ENCODE measurements at regions of chr3 and their contacts with region 1.

Region 1: GRCh38 chr3:175270198-175270837 is 411.2 kb downstream of the NAALADL2 start:
- DNase-seq: no peak
- ATAC-seq: peak; percentile 8
- H3K4me3 ChIP-seq: peak overlapping the region; percentile 77
- H3K27ac ChIP-seq: peak overlapping the region; percentile 35; the same call in 1 of the 2 replicates
- H3K4me1 ChIP-seq: no peaks in the 10 kb centered on the region
- H3K27me3 ChIP-seq: no peaks in the 10 kb centered on the region
- CTCF ChIP-seq: no peak
- EP300 ChIP-seq: no peak
- POLR2A ChIP-seq: no peak
- RAD21 ChIP-seq: no peak

Region 2: GRCh38 chr3:175255698-175256097 is 14.6 kb before region 1 on chr3:
- CTCF ChIA-PET with region 1: interaction called, 5 read pairs
- POLR2A ChIA-PET with region 1: interaction called, 3 read pairs
- RAD21 ChIA-PET with region 1: interaction called, 8 read pairs
- SMC1A ChIA-PET with region 1: interaction called, 14 read pairs
- in situ Hi-C with region 1: no loop called
- intact Hi-C with region 1: no loop called
- DNase-seq: no peak
- ATAC-seq: peak; percentile 11
- H3K4me3 ChIP-seq: no peak overlapping the region
- H3K27ac ChIP-seq: no peak overlapping the region
- H3K4me1 ChIP-seq: no peaks in the 10 kb centered on the region
- H3K27me3 ChIP-seq: no peaks in the 10 kb centered on the region
- CTCF ChIP-seq: no peak
- EP300 ChIP-seq: no peak
- POLR2A ChIP-seq: no peak
- RAD21 ChIP-seq: no peak

Region 3: GRCh38 chr3:175295248-175296052 is 25.1 kb after region 1 on chr3:
- CTCF ChIA-PET with region 1: interaction called, 3 read pairs
- POLR2A ChIA-PET with region 1: interaction called, 14 read pairs
- RAD21 ChIA-PET with region 1: interaction called, 24 read pairs
- SMC1A ChIA-PET with region 1: interaction called, 39 read pairs
- in situ Hi-C with region 1: no loop called
- intact Hi-C with region 1: no loop called
- DNase-seq: no peak
- ATAC-seq: peak; percentile 27
- H3K4me3 ChIP-seq: no peak overlapping the region
- H3K27ac ChIP-seq: no peak overlapping the region
- H3K4me1 ChIP-seq: no peaks in the 10 kb centered on the region
- H3K27me3 ChIP-seq: no peaks in the 10 kb centered on the region
- CTCF ChIP-seq: no peak
- EP300 ChIP-seq: no peak
- POLR2A ChIP-seq: no peak
- RAD21 ChIP-seq: no peak

Region 4: DNA sequence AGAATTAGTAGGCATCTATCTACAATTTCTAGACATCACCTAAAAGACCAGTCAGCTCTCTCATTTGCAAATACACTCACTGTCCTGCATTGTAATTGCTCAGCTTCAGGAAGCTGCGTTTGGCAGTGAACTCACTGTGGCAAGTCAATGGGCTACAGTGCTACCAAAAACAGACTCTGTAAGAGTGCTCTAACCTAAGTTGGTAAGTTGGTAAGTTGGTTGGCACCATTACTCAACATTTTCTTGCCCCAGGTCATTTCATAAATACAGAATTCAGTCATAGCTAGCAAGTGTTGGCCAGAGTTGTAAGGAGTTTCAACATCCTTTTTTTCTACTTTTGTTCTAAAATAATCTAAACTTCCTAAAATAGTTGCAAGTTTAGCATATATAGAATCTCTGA is 55.1 kb after region 1 on chr3:
- CTCF ChIA-PET with region 1: no interaction called
- POLR2A ChIA-PET with region 1: interaction called, 3 read pairs
- RAD21 ChIA-PET with region 1: interaction called, 7 read pairs
- SMC1A ChIA-PET with region 1: interaction called, 15 read pairs
- in situ Hi-C with region 1: no loop called
- intact Hi-C with region 1: no loop called
- DNase-seq: no peak
- ATAC-seq: peak; percentile 90
- H3K4me3 ChIP-seq: no peak overlapping the region
- H3K27ac ChIP-seq: no peak overlapping the region
- H3K4me1 ChIP-seq: no peaks in the 10 kb centered on the region
- H3K27me3 ChIP-seq: no peaks in the 10 kb centered on the region
- CTCF ChIP-seq: no peak
- EP300 ChIP-seq: no peak
- POLR2A ChIP-seq: no peak
- RAD21 ChIP-seq: no peak

Region 5: GRCh38 chr3:175356899-175357324 is 86.6 kb after region 1 on chr3:
- CTCF ChIA-PET with region 1: interaction called, 53 read pairs
- POLR2A ChIA-PET with region 1: interaction called, 30 read pairs
- RAD21 ChIA-PET with region 1: interaction called, 122 read pairs
- SMC1A ChIA-PET with region 1: interaction called, 164 read pairs
- in situ Hi-C with region 1: no loop called
- intact Hi-C with region 1: loop called (anchors 2 kb)
- DNase-seq: no peak
- ATAC-seq: peak; percentile 64
- H3K4me3 ChIP-seq: no peak overlapping the region
- H3K27ac ChIP-seq: no peak overlapping the region
- H3K4me1 ChIP-seq: no peaks in the 10 kb centered on the region
- H3K27me3 ChIP-seq: no peaks in the 10 kb centered on the region
- CTCF ChIP-seq: no peak
- EP300 ChIP-seq: peak; percentile 41 to 79; a peak in 3 of 4 replicates
- POLR2A ChIP-seq: no peak
- RAD21 ChIP-seq: no peak

Region 6: GRCh38 chr3:175392653-175393052 is 122.3 kb after region 1 on chr3:
- CTCF ChIA-PET with region 1: no interaction called
- POLR2A ChIA-PET with region 1: no interaction called
- RAD21 ChIA-PET with region 1: interaction called, 8 read pairs
- SMC1A ChIA-PET with region 1: interaction called, 16 read pairs
- in situ Hi-C with region 1: no loop called
- intact Hi-C with region 1: no loop called
- DNase-seq: no peak
- ATAC-seq: 0 out of 3 replicates have a peak, but pooled peaks have one; percentile 23
- H3K4me3 ChIP-seq: no peak overlapping the region
- H3K27ac ChIP-seq: no peak overlapping the region
- H3K4me1 ChIP-seq: no peaks in the 10 kb centered on the region
- H3K27me3 ChIP-seq: no peaks in the 10 kb centered on the region
- CTCF ChIP-seq: no peak
- EP300 ChIP-seq: no peak
- POLR2A ChIP-seq: no peak
- RAD21 ChIP-seq: no peak

Region 7: GRCh38 chr3:175486255-175486654 is 215.9 kb after region 1 on chr3:
- CTCF ChIA-PET with region 1: interaction called, 5 read pairs
- POLR2A ChIA-PET with region 1: interaction called, 4 read pairs
- RAD21 ChIA-PET with region 1: interaction called, 14 read pairs
- SMC1A ChIA-PET with region 1: interaction called, 11 read pairs
- in situ Hi-C with region 1: no loop called
- intact Hi-C with region 1: loop called (anchors 2 kb)
- DNase-seq: peak; percentile 39
- ATAC-seq: peak; percentile 81
- H3K4me3 ChIP-seq: no peak overlapping the region
- H3K27ac ChIP-seq: no peak overlapping the region
- H3K4me1 ChIP-seq: peaks cover 5% of the 10 kb centered on the region; the same call in 1 of the 2 replicates
- H3K27me3 ChIP-seq: no peaks in the 10 kb centered on the region
- CTCF ChIP-seq: no peak
- EP300 ChIP-seq: peak; percentile 26 to 41; a peak in 1 of 4 replicates
- POLR2A ChIP-seq: no peak
- RAD21 ChIP-seq: peak; percentile 3; the same call in 1 of the 2 replicates

Measured in GM12878 (cell line).